SK-N-SH (cell line): ENCODE measurements at regions of chr5 and their contacts with region 1.

Region 1: DNA sequence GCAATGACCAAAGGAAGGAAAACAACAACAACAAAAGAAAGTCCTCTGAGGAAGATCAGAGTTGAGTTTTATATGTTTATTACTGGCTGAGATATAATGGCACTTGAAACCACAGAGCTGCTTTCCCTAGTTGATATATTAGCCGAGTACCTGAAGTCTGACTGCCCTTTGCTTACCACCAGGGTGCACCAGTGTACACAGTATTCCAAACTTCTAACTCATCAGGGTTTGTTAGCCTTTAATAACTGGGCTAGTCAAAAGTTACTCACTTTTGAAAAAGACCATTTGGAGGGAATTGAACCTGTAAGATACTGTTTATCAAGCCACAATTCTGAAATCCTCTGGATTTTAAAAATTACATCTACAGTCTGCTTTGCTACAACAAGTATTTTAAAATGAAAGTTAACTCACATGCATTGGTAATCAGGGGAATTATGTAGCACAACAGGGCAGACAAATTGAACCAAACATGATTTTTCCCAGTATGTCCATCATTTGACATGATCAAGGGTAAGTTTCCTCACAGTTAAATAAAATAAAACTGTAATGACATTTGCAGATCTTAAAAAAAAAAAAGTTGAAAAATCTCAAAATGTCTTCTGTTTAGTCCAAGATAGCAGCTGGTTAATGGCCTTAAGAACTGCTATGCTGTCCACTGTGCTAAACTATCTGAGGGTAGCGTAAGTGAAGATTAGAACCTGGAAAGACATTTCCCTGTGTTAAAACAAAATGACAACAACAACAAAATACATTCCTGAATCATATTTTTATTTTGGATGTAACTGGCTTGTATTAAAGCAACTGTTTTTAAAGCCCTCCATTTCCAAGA is 57.3 kb upstream of the C6 start:
- DNase-seq: peak; percentile 18
- H3K4me3 ChIP-seq: no peak overlapping the region; a peak in 1 of 4 replicates
- H3K27ac ChIP-seq: peak overlapping the region in 1 of 2 experiments; percentile 43; a peak in 2 of 4 replicates
- H3K4me1 ChIP-seq: peaks cover 0 to 5% of the 10 kb centered on the region in 2 experiments; a peak in 3 of 4 replicates
- H3K27me3 ChIP-seq: no peaks in the 10 kb centered on the region
- CTCF ChIP-seq: peak; percentile 91
- EP300 ChIP-seq: no peak
- RAD21 ChIP-seq: peak; percentile 94

Region 2: DNA sequence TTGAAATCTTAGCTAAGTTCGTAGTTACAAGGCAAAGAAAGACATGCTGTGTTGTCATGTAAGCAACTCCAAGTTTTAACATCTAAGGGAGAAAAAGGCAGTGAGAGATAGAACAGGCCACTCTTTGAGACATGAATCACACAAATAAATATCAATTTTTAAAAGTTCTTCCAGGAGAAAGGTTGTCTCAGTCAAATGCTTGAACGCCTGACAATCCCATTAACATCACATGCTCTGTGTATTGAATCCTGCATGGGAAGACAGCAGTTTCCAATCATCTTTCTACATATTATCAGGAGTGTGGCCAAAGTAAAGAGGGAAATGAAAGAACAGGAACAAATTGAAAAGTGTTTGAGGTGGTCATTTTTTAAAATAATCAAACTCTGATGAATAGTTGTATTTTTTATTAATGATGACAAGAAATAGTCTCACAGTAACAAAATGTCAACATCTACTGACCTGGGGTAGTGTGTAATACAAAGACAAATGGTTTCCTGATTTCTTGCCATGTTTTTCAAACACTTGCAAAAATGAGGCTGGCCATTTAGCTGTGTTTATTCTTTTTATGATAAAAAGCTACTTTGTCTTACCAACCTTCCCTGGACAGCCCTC is 50.9 kb before region 1 on chr5:
- CTCF ChIA-PET with region 1: no interaction called
- POLR2A ChIA-PET with region 1: no interaction called
- DNase-seq: no peak
- H3K4me3 ChIP-seq: no peak overlapping the region
- H3K27ac ChIP-seq: no peak overlapping the region
- H3K4me1 ChIP-seq: no peaks in the 10 kb centered on the region; a peak in 1 of 4 replicates
- H3K27me3 ChIP-seq: no peaks in the 10 kb centered on the region
- CTCF ChIP-seq: no peak
- EP300 ChIP-seq: no peak
- RAD21 ChIP-seq: no peak

Region 3: GRCh38 chr5:41232797-41233196 is 37.8 kb before region 1 on chr5:
- CTCF ChIA-PET with region 1: no interaction called
- POLR2A ChIA-PET with region 1: no interaction called
- DNase-seq: no peak
- H3K4me3 ChIP-seq: no peak overlapping the region
- H3K27ac ChIP-seq: no peak overlapping the region
- H3K4me1 ChIP-seq: no peaks in the 10 kb centered on the region
- H3K27me3 ChIP-seq: no peaks in the 10 kb centered on the region
- CTCF ChIP-seq: no peak
- EP300 ChIP-seq: no peak
- RAD21 ChIP-seq: no peak

Region 4: DNA sequence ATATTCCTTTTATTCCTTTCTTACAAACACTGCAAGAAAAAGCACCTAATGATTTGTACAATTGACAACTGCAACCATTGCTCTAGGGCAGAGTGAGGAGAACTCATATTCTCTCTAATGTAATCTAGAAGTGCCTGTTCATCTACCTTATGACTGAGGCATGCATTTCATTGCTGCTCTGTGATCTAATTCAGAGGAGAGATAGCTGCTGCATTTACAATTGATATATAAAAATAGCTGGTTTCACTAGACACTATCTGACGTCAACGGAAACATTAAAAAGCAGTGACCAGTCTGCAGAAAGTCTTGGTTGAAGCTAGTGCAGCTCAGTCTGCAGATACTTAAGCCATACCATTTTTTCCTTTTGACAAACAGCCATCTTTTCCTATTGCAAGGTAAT is 15.5 kb after region 1 on chr5:
- CTCF ChIA-PET with region 1: interaction called, 10 read pairs
- POLR2A ChIA-PET with region 1: no interaction called
- DNase-seq: peak; percentile 46
- H3K4me3 ChIP-seq: no peak overlapping the region
- H3K27ac ChIP-seq: peak overlapping the region in 1 of 2 experiments; percentile 83; a peak in 2 of 4 replicates
- H3K4me1 ChIP-seq: peaks cover 0 to 16% of the 10 kb centered on the region in 2 experiments; a peak in 2 of 4 replicates
- H3K27me3 ChIP-seq: no peaks in the 10 kb centered on the region
- CTCF ChIP-seq: no peak
- EP300 ChIP-seq: peak in 1 of 2 experiments; percentile 43; a peak in 1 of 4 replicates
- RAD21 ChIP-seq: 0 out of 2 replicates have a peak, but pooled peaks have one; percentile 11

Region 5: DNA sequence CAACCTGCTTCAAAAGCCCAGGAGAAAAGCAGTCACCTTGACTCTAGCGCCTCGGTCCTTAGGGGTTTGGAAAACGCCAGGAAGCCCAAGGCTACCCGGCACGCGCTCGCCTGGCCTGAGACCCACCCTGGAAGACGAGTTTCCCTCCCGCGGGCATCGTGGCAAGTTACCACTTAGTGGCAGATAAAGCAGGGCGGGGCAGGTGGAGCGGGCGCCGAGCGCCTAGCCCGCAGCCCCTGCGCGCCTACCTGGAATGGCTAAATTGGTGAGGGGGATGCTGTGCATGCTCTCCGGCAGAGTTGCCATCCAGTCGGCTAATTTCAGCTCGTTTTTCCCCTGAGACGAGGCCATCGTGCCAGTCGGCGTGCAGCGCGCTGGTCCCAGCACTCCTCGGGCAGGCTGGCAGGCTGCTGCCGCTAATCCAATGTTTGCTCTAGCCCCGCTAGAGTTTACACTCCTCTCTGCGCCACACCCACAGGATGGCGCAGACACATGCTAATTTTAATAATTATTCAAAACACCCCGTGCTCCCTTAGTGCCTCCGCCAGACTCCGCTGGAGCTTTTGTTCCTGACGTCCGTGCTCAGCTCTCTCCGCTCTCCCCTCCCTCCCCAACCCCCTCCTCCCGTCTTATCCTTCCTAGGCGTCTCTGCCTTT is 239.7 kb after region 1 on chr5 and contains the start of gene PLCXD3:
- CTCF ChIA-PET with region 1: interaction called, 21 read pairs
- POLR2A ChIA-PET with region 1: interaction called, 3 read pairs
- DNase-seq: peak; percentile 69
- H3K4me3 ChIP-seq: peak within 1 kb of the TSS; percentile 67 to 71
- H3K27ac ChIP-seq: peak within 1 kb of the TSS in 1 of 2 experiments; percentile 93; a peak in 2 of 4 replicates
- H3K4me1 ChIP-seq: peaks cover 10 to 15% of the 10 kb centered on the region in 2 experiments; a peak in 3 of 4 replicates
- H3K27me3 ChIP-seq: 0 out of 2 replicates have a peak, but pooled peaks cover 9% of the 10 kb centered on the region
- CTCF ChIP-seq: no peak
- EP300 ChIP-seq: no peak
- RAD21 ChIP-seq: no peak
- polyA plus RNA-seq, gene PLCXD3: 0.15 and 0.34 TPM in 2 replicates